ENCODE measurements at regions of chr9 and their contacts with region 1.

Region 1: DNA sequence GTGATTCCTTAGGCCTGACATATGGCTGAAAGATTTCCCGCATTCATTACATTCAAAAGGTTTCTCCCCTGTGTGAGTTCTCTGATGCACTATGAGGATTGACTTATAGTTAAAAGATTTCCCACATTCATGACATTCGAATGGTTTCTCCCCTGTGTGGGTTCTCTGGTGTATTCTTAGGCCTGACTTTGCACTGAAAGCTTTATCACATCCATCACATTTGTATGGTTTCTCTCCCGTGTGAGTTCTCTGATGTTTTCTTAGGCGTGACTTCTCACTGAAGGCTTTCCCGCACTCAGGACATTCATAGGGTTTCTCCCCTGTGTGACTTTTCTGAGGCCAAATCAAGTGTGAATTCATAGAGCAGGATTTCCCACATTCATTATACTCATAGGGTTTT is 35.8 kb downstream of the ZNF782 start:
- DNase-seq: no peak
- ATAC-seq: no peak
- H3K4me3 ChIP-seq: no peak overlapping the region
- H3K4me1 ChIP-seq: no peaks in the 10 kb centered on the region
- CTCF ChIP-seq: no peak

Region 2: DNA sequence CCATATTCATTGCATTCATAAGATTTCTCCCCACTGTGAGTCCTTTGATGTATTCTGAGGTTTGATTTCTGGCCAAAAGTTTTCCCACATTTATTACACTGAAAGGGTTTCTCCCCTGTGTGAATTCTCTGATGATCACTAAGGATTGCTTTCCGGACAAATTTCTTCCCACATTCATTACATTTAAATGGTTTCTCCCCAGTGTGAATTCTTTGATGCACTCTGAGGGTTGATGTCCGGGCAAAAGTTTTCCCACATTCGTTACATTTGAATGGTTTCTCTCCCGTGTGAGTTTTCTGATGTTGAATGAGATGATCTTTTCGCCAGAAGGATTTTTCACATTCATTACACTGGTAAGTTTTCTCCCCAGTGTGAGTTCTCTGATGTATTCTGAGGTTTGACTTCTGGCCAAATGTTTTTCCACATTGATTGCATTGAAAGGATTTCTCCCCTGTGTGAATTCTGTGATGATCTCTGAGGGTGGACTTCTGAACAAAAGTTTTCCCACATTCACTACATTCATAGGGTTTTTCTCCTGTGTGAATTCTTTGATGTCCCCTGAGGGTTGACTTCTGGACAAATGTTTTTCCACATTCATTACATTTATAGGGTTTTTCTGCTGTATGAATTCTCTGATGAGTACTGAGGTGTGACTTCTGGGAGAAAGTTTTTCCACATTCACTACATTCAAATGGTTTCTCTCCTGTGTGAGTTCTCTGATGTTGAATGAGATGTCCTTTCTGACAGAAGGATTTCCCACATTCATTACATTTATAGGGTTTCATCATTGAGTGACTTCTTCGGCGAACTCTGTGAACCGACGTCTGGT is 59.5 kb before region 1 on chr9:
- intact Hi-C with region 1: loop called in 1 of 2 experiments (anchors 10 kb)
- DNase-seq: no peak
- ATAC-seq: no peak
- H3K4me3 ChIP-seq: no peak overlapping the region
- H3K4me1 ChIP-seq: no peaks in the 10 kb centered on the region
- CTCF ChIP-seq: no peak

Measured in mucosa of descending colon (tissue), 3 donors.